Activated T-helper 1 cell treated with anti-CD3 and anti-CD28 coated beads, Interleukin-12 subunit alpha, Interleukin-12 subunit beta, Interleukin-2, Interleukin-4 antibody, amounts not matched to agents 30 ng/mL and 10 ng/mL and 1 ng/mL, durations not matched to agents 14 hours and 24 hours and 36 hours (primary cell): ENCODE measurements at regions of chr3 and their contacts with region 1.

Region 1: GRCh38 chr3:170221924-170222646 is at the start of gene PRKCI:
- DNase-seq: peak; percentile 85
- H3K4me3 Mint-ChIP-seq: peak within 1 kb of the TSS; percentile 94
- H3K27ac Mint-ChIP-seq: peak within 1 kb of the TSS; percentile 87
- H3K4me1 Mint-ChIP-seq: peaks cover 25% of the 10 kb centered on the region
- H3K27me3 Mint-ChIP-seq: no peaks in the 10 kb centered on the region
- total RNA-seq, gene PRKCI: 23.0 and 24.2 TPM in 2 replicates

Region 2: GRCh38 chr3:169966428-169966950 is 255.6 kb before region 1 on chr3 and contains the start of gene SEC62:
- intact Hi-C with region 1: loop called (anchors 2 kb)
- DNase-seq: peak; percentile 90
- H3K4me3 Mint-ChIP-seq: peak within 1 kb of the TSS; percentile 91
- H3K27ac Mint-ChIP-seq: peak within 1 kb of the TSS; percentile 99
- H3K4me1 Mint-ChIP-seq: peaks cover 42% of the 10 kb centered on the region
- H3K27me3 Mint-ChIP-seq: peaks cover 2% of the 10 kb centered on the region
- total RNA-seq, gene SEC62: 75.4 and 85.7 TPM in 2 replicates

Region 3: GRCh38 chr3:170257145-170257544 is 35.1 kb after region 1 on chr3:
- intact Hi-C with region 1: loop called (anchors 1 kb)
- DNase-seq: no peak
- H3K4me3 Mint-ChIP-seq: no peak overlapping the region
- H3K27ac Mint-ChIP-seq: peak overlapping the region; percentile 72
- H3K4me1 Mint-ChIP-seq: peaks cover 34% of the 10 kb centered on the region
- H3K27me3 Mint-ChIP-seq: no peaks in the 10 kb centered on the region

Region 4: GRCh38 chr3:170869645-170870593 is 647.8 kb after region 1 on chr3 and contains the start of gene RPL22L1:
- intact Hi-C with region 1: loop called (anchors 5 kb)
- DNase-seq: peak; percentile 90
- H3K4me3 Mint-ChIP-seq: peak within 1 kb of the TSS; percentile 98
- H3K27ac Mint-ChIP-seq: peak within 1 kb of the TSS; percentile 100
- H3K4me1 Mint-ChIP-seq: peaks cover 24% of the 10 kb centered on the region
- H3K27me3 Mint-ChIP-seq: peaks cover 4% of the 10 kb centered on the region
- total RNA-seq, gene RPL22L1: 123 and 145 TPM in 2 replicates